ENCODE measurements at regions of chr16 and their contacts with region 1.

Region 1: GRCh38 chr16:20910781-20911321 is 10.3 kb downstream of the LYRM1 start:
- DNase-seq: no peak
- ATAC-seq: peak; percentile 82
- H3K4me3 Mint-ChIP-seq: no peak overlapping the region
- H3K27ac Mint-ChIP-seq: peak overlapping the region; percentile 86
- H3K4me1 Mint-ChIP-seq: peaks cover 51% of the 10 kb centered on the region
- H3K27me3 Mint-ChIP-seq: no peaks in the 10 kb centered on the region
- CTCF ChIP-seq: no peak

Region 2: GRCh38 chr16:20704281-20704680 is 206.6 kb before region 1 on chr16:
- CTCF ChIA-PET with region 1: no interaction called
- POLR2A ChIA-PET with region 1: no interaction called
- intact Hi-C with region 1: no loop called
- DNase-seq: no peak
- ATAC-seq: no peak
- H3K4me3 Mint-ChIP-seq: no peak overlapping the region
- H3K27ac Mint-ChIP-seq: no peak overlapping the region
- H3K4me1 Mint-ChIP-seq: no peaks in the 10 kb centered on the region
- H3K27me3 Mint-ChIP-seq: no peaks in the 10 kb centered on the region
- CTCF ChIP-seq: no peak

Region 3: GRCh38 chr16:20900299-20901067 is 10.4 kb before region 1 on chr16 and contains the starts of genes DCUN1D3 and LYRM1:
- CTCF ChIA-PET with region 1: interaction called, 5 read pairs
- POLR2A ChIA-PET with region 1: interaction called, 14 read pairs
- intact Hi-C with region 1: no loop called
- DNase-seq: peak; percentile 95
- ATAC-seq: peak; percentile 82
- H3K4me3 Mint-ChIP-seq: peak within 1 kb of the TSS; percentile 93
- H3K27ac Mint-ChIP-seq: peak within 1 kb of the TSS; percentile 98
- H3K4me1 Mint-ChIP-seq: peaks cover 70% of the 10 kb centered on the region
- H3K27me3 Mint-ChIP-seq: no peaks in the 10 kb centered on the region
- CTCF ChIP-seq: no peak
- total RNA-seq, gene DCUN1D3: 5.9 to 6.9 TPM
- total RNA-seq, gene LYRM1: 31.3 to 32.5 TPM

Region 4: DNA sequence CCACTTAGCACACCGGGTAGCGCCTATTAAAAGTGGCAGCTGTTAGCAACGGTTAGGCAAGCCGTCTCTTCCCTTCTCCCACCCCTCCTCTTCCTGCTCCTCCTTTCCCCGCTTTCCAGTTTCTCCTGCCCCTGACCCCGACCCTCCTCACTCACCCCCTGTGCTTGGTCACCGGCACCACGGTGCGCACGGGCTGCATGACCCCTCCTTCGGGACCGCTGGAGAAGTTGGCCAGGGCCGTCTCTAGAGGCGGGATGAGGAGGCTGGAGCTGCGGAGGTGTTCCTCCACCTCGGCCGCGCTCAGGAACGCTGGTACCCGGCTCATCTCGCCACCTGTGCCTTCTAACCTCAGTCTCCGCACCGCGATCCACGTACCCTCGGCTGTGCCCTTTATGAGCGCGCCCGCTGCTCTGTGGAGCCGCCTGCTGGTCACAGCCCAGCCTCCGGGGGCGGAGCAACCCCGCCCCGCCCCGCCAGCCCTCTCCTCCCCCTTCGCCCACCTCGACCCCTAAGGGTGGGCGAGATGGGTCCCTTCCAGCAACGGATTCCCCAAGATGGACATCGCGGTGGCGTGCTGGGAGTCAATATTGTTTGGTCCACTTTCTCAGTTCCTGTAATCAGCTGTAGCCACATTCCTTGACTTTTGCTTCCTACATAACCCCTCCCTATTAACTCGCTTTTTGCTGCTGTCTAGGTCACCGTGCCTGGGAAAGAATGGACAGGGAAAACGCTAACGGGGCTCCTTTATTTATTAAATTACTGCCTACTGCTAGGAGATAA is 367.3 kb after region 1 on chr16 and contains the start of gene CRYM:
- CTCF ChIA-PET with region 1: no interaction called
- POLR2A ChIA-PET with region 1: no interaction called
- intact Hi-C with region 1: no loop called
- DNase-seq: peak; percentile 69
- ATAC-seq: peak; percentile 97
- H3K4me3 Mint-ChIP-seq: peak within 1 kb of the TSS; percentile 12
- H3K27ac Mint-ChIP-seq: no peak within 1 kb of the TSS
- H3K4me1 Mint-ChIP-seq: no peaks in the 10 kb centered on the region
- H3K27me3 Mint-ChIP-seq: peaks cover 58% of the 10 kb centered on the region
- CTCF ChIP-seq: peak; percentile 84
- total RNA-seq, gene CRYM: not detected

Measured in activated CD8-positive, alpha-beta T cell treated with anti-CD3 and anti-CD28 coated beads for 36 hours (primary cell).